Right lobe of liver (tissue), 6 donors: ENCODE measurements at regions of chr14 and their contacts with region 1.

Region 1: GRCh38 chr14:95561001-95561412 is 26.2 kb downstream of the GLRX5 start:
- DNase-seq: peak; percentile 86 to 88 (median 88)
- ATAC-seq: peak; percentile 97 to 99 (median 99)
- H3K4me3 ChIP-seq: no peak overlapping the region
- H3K27ac ChIP-seq: no peak overlapping the region
- H3K4me1 ChIP-seq: peaks cover 0 to 5% (median 1%) of the 10 kb centered on the region in 4 donors
- H3K27me3 ChIP-seq: no peaks in the 10 kb centered on the region
- CTCF ChIP-seq: peak; percentile 95 to 99 (median 98)
- POLR2A ChIP-seq: no peak

Region 2: GRCh38 chr14:95424529-95424928 is 136.5 kb before region 1 on chr14:
- intact Hi-C with region 1: no loop called
- DNase-seq: no peak
- ATAC-seq: peak in 3 of 4 donors; percentile 25 to 70 (median 26)
- H3K4me3 ChIP-seq: no peak overlapping the region
- H3K27ac ChIP-seq: no peak overlapping the region
- H3K4me1 ChIP-seq: peaks cover 0 to 18% (median 4%) of the 10 kb centered on the region in 4 donors
- H3K27me3 ChIP-seq: no peaks in the 10 kb centered on the region
- CTCF ChIP-seq: no peak
- POLR2A ChIP-seq: no peak

Region 3: GRCh38 chr14:95683793-95684192 is 122.8 kb after region 1 on chr14:
- intact Hi-C with region 1: loop called in 1 of 2 experiments (anchors 10 kb)
- DNase-seq: no peak
- ATAC-seq: peak; percentile 75 to 82 (median 78)
- H3K4me3 ChIP-seq: no peak overlapping the region
- H3K27ac ChIP-seq: no peak overlapping the region
- H3K4me1 ChIP-seq: no peaks in the 10 kb centered on the region
- H3K27me3 ChIP-seq: no peaks in the 10 kb centered on the region
- CTCF ChIP-seq: peak; percentile 57 to 81 (median 71)
- POLR2A ChIP-seq: no peak

Region 4: GRCh38 chr14:95774265-95775160 is 213.5 kb after region 1 on chr14:
- intact Hi-C with region 1: loop called in 1 of 2 experiments (anchors 10 kb)
- DNase-seq: peak in 1 of 3 donors; percentile 48
- ATAC-seq: peak; percentile 72 to 80 (median 80)
- H3K4me3 ChIP-seq: no peak overlapping the region
- H3K27ac ChIP-seq: no peak overlapping the region
- H3K4me1 ChIP-seq: no peaks in the 10 kb centered on the region
- H3K27me3 ChIP-seq: no peaks in the 10 kb centered on the region
- CTCF ChIP-seq: peak; percentile 75 to 90 (median 86)
- POLR2A ChIP-seq: no peak

Region 5: GRCh38 chr14:95979339-95980042 is 418.5 kb after region 1 on chr14:
- intact Hi-C with region 1: loop called in 1 of 2 experiments (anchors 10 kb)
- DNase-seq: no peak
- ATAC-seq: no peak
- H3K4me3 ChIP-seq: no peak overlapping the region
- H3K27ac ChIP-seq: no peak overlapping the region
- H3K4me1 ChIP-seq: no peaks in the 10 kb centered on the region
- H3K27me3 ChIP-seq: no peaks in the 10 kb centered on the region
- CTCF ChIP-seq: no peak
- POLR2A ChIP-seq: no peak

Region 6: DNA sequence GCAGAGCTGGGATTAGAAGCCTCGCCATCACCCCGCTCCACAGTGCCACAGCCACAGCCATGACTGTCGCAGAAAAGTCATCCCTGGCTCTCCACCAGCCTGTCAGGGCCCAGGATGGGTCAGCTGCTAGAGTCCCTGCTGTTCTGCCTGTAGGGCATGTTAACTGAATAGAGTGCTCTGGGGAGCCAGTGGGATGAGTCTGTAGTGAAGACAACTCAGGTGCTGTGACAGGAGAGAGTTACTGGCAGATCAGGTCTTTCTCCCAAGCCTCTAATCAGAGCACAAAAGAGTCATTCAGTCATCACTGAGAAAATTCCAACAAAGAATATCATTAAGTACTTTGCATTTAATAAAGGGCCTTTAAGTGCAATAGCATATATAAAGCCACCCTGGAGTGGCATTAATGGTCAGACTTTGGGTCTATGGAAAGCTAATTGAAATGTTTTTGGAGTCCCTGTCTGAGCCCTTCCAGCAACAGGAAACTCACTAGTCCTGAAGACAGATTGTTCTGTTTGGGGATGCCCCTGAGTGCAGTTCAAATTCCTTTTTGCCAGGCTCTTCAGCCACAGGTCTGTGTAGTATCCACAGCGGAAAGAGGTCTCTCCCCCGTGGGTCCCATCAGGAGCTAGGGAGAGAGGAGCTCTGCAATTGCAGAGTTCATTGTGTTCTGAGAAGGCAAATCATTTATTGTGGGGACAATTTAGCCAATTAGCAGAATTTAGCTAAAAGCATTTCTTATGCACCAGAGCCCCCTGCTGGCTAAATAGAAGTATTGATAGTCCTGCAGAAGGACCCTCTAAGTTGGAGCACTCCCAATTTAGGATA is 433.0 kb after region 1 on chr14:
- intact Hi-C with region 1: loop called (anchors 10 kb)
- DNase-seq: no peak
- ATAC-seq: peak; percentile 63 to 77 (median 73)
- H3K4me3 ChIP-seq: no peak overlapping the region
- H3K27ac ChIP-seq: no peak overlapping the region
- H3K4me1 ChIP-seq: no peaks in the 10 kb centered on the region
- H3K27me3 ChIP-seq: no peaks in the 10 kb centered on the region
- CTCF ChIP-seq: peak; percentile 79 to 85 (median 83)
- POLR2A ChIP-seq: no peak